Activated B cell treated with CpG ODN at 0.5 μM for 24 hours (primary cell): ENCODE measurements at regions of chr1 and their contacts with region 1.

Region 1: GRCh38 chr1:112882271-112882744 is 73.7 kb downstream of the SLC16A1 start:
- DNase-seq: no peak
- ATAC-seq: no peak
- H3K4me3 Mint-ChIP-seq: no peak overlapping the region
- H3K27ac Mint-ChIP-seq: no peak overlapping the region
- H3K4me1 Mint-ChIP-seq: no peaks in the 10 kb centered on the region
- H3K27me3 Mint-ChIP-seq: peaks cover 7% of the 10 kb centered on the region
- CTCF ChIP-seq: no peak

Region 2: DNA sequence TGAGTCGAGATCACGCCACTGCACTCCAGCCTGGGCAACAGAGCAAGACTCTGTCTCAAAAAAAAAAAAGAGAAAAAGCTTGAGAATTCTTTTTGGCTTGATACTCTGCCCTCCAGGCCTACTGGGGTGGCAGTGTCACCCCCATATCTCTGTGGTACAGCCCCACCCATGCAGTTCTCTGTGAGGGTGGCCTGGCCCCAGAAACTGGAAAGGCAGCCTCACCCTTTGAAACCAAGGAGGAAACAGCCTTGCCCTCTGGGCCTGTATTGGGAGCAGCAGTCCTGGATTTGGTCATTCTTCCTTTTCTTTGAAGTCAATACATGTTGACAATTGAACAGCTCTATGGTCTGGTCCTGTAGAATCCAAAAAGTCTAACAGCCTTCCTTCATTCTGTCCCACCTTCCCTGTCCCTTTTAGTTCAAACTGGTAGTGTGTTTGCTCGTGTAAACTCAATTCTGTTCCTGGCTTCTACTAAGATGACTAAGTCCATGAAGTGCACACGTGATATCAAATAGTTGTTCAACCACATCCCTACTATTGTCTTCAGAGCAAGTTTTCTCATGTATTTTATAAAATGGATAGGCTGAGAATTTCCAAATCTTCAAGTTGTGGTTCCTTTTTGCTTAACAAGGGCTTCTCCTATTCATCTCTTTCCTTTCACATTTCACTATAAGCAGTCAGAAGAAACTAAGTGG is 276.5 kb before region 1 on chr1:
- CTCF ChIA-PET with region 1: no interaction called
- POLR2A ChIA-PET with region 1: no interaction called
- intact Hi-C with region 1: no loop called
- DNase-seq: no peak
- ATAC-seq: no peak
- H3K4me3 Mint-ChIP-seq: no peak overlapping the region
- H3K27ac Mint-ChIP-seq: no peak overlapping the region
- H3K4me1 Mint-ChIP-seq: peaks cover 6% of the 10 kb centered on the region
- H3K27me3 Mint-ChIP-seq: no peaks in the 10 kb centered on the region
- CTCF ChIP-seq: no peak

Region 3: GRCh38 chr1:112809253-112809684 is 73.0 kb before region 1 on chr1:
- CTCF ChIA-PET with region 1: no interaction called
- POLR2A ChIA-PET with region 1: no interaction called
- intact Hi-C with region 1: loop called (anchors 1 kb)
- DNase-seq: peak; percentile 53
- ATAC-seq: peak; percentile 75
- H3K4me3 Mint-ChIP-seq: no peak overlapping the region
- H3K27ac Mint-ChIP-seq: no peak overlapping the region
- H3K4me1 Mint-ChIP-seq: no peaks in the 10 kb centered on the region
- H3K27me3 Mint-ChIP-seq: peaks cover 2% of the 10 kb centered on the region
- CTCF ChIP-seq: peak; percentile 15

Region 4: DNA sequence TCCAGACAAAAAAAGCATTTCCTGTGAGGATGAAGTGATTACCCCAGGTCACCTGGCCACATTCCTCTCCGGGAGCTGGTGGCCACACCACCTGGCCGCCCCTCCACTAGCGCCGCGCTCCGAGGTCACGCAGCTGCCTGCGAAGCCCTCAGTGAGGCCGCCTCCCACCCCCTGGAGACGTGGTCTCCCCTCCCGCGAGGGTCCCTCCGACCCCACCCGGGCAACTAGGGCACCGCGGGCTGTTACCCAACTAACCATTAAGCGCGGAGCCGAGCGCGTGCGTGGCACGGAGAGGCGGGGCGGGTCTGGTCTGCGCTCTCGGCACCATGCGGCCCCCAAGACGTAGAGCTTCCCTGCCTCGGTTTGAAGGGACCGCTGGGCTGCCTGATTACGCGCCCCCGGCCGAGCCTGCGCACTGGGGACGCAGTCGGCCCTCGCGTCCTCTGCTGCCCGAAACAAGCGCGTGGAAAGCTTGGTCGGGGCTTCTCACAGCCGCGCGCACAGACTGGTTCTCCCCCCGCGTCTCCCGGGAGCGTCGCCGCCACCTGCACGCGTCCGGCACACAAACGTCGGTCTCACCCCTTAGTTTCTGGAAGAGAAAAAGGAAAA is 32.8 kb before region 1 on chr1:
- CTCF ChIA-PET with region 1: no interaction called
- POLR2A ChIA-PET with region 1: interaction called, 10 read pairs
- intact Hi-C with region 1: no loop called
- DNase-seq: no peak
- ATAC-seq: no peak
- H3K4me3 Mint-ChIP-seq: peak overlapping the region; percentile 28
- H3K27ac Mint-ChIP-seq: no peak overlapping the region
- H3K4me1 Mint-ChIP-seq: peaks cover 2% of the 10 kb centered on the region
- H3K27me3 Mint-ChIP-seq: peaks cover 28% of the 10 kb centered on the region
- CTCF ChIP-seq: no peak

Region 5: DNA sequence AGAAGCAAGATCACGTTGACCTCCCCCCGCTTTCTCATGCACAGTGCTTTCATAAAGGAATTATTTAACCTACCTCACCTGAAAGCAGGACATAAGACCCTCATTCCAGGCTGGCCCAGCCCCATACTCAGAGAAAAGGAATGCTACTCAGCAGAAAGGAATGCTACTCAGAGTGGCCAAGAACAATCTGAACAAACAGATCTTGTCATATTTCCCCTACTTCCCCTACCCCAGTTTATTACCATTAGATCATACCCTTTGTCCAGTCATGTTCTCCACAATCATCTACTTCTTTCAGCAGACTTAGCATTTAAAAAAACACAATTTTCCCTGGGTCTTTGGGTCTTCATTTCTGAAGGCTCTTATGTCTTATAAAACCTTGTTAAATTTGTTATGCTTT is 16.2 kb before region 1 on chr1:
- CTCF ChIA-PET with region 1: no interaction called
- POLR2A ChIA-PET with region 1: no interaction called
- intact Hi-C with region 1: no loop called
- DNase-seq: no peak
- ATAC-seq: no peak
- H3K4me3 Mint-ChIP-seq: no peak overlapping the region
- H3K27ac Mint-ChIP-seq: no peak overlapping the region
- H3K4me1 Mint-ChIP-seq: no peaks in the 10 kb centered on the region
- H3K27me3 Mint-ChIP-seq: peaks cover 3% of the 10 kb centered on the region
- CTCF ChIP-seq: no peak

Region 6: DNA sequence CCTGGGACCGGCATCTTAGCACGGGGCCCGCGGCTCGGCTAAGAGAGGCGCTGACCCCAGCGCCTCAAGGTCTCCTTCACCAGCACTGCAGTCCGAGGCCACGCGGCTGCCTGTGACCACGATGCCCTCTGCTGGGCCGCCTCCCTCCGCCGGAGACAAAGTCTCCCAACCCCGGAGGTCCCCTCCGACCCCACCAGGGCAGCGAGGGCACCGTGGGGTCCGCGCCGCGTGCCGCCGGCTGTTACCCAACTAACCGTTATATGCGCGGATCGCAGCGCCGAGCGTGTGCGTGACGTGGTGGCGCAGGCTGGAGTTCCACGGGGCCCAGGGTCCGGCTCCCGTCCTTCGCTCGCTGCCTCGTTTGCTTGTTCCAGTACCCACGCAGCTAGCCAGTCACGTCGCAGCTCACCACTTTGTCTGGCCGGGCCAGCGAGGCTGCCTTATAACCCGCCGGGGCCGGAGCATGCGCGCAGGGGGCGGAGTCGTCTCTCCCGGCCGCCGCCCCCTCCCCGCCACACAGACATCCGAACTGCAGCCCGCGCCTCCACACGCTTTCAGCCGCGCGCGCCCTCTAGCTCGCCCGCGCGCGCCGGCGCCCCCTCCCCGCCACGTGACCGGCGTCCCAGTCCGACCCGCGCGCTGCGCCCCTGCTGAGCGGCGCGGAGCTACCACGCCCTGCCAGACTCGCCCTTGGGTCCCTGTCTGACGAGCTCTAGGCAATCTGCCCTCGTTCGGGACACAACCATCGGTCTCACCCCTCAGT is 73.7 kb after region 1 on chr1 and contains the start of gene SLC16A1:
- CTCF ChIA-PET with region 1: interaction called, 3 read pairs
- POLR2A ChIA-PET with region 1: no interaction called
- intact Hi-C with region 1: loop called (anchors 1 kb)
- DNase-seq: peak; percentile 89
- ATAC-seq: peak; percentile 82
- H3K4me3 Mint-ChIP-seq: peak within 1 kb of the TSS; percentile 98
- H3K27ac Mint-ChIP-seq: peak within 1 kb of the TSS; percentile 98
- H3K4me1 Mint-ChIP-seq: peaks cover 49% of the 10 kb centered on the region
- H3K27me3 Mint-ChIP-seq: no peaks in the 10 kb centered on the region
- CTCF ChIP-seq: no peak
- total RNA-seq, gene SLC16A1: 17.8 and 17.9 TPM in 2 replicates

Region 7: GRCh38 chr1:113007706-113008364 is 125.5 kb after region 1 on chr1:
- CTCF ChIA-PET with region 1: no interaction called
- POLR2A ChIA-PET with region 1: no interaction called
- intact Hi-C with region 1: no loop called
- DNase-seq: no peak
- ATAC-seq: no peak
- H3K4me3 Mint-ChIP-seq: no peak overlapping the region
- H3K27ac Mint-ChIP-seq: no peak overlapping the region
- H3K4me1 Mint-ChIP-seq: no peaks in the 10 kb centered on the region
- H3K27me3 Mint-ChIP-seq: no peaks in the 10 kb centered on the region
- CTCF ChIP-seq: no peak

Region 8: DNA sequence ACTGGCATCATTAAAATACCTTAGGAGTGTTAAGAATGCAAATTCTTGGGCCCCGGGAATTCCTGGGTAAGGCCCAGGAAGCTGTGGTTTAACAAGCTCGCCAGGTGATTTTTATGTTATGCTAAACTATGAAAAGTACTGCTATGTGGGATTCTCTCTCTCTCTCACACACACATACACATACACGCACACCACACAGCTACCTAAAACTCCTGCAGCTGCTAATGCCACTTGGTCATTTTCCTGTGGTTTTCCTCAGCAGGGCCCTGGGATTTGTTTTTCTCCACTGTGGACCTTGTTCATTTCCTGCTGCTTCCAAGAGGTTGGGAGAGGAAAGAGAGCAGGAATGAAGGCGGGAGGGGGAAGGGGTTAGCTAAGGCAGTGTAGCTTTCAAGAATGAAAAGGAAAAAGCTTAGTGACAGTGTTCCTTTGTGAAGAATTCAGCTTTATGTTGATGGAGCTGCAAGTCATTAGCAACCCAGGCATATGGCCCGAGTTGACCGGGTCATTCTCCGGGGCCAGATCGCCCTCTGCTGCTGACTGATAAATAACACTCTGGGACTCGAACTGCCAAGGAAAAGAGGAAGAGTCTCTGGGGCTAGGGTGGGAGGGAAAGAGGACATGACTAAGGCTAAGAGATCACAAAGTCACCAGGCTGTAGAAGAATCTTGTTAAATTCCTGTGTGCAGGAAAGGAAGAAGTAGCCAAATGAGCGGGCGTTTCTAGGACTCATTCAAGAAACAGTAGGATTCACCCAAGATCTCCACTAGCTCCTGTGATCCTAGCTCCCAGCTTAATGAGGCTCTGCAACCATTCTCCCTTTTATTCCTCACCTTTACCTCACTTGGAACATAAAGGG is 160.2 kb after region 1 on chr1:
- CTCF ChIA-PET with region 1: interaction called, 32 read pairs
- POLR2A ChIA-PET with region 1: interaction called, 5 read pairs
- intact Hi-C with region 1: loop called (anchors 1 kb)
- DNase-seq: peak; percentile 20
- ATAC-seq: peak; percentile 77
- H3K4me3 Mint-ChIP-seq: peak overlapping the region; percentile 46
- H3K27ac Mint-ChIP-seq: peak overlapping the region; percentile 30
- H3K4me1 Mint-ChIP-seq: peaks cover 27% of the 10 kb centered on the region
- H3K27me3 Mint-ChIP-seq: peaks cover 6% of the 10 kb centered on the region
- CTCF ChIP-seq: no peak